CD4-positive, alpha-beta T cell (primary cell): ENCODE measurements at regions of chr20 and their contacts with region 1.

Region 1: GRCh38 chr20:63707549-63708300 is at the starts of genes ARFRP1 and ZGPAT:
- DNase-seq: peak; percentile 71 to 94 (median 88)
- ATAC-seq: peak; percentile 78
- H3K4me3 ChIP-seq: peak within 1 kb of the TSS; percentile 76
- H3K4me3 Mint-ChIP-seq: peak within 1 kb of the TSS; percentile 88
- H3K27ac ChIP-seq: peak within 1 kb of the TSS; percentile 55 to 71
- H3K27ac Mint-ChIP-seq: peak within 1 kb of the TSS; percentile 89
- H3K4me1 ChIP-seq: peaks cover 45% of the 10 kb centered on the region
- H3K4me1 Mint-ChIP-seq: peaks cover 46% of the 10 kb centered on the region
- H3K27me3 ChIP-seq: no peaks in the 10 kb centered on the region
- H3K27me3 Mint-ChIP-seq: no peaks in the 10 kb centered on the region
- CTCF ChIP-seq: no peak
- total RNA-seq, gene ARFRP1: 34.5 to 35.7 TPM
- total RNA-seq, gene ZGPAT: 28.2 to 33.4 TPM

Region 2: DNA sequence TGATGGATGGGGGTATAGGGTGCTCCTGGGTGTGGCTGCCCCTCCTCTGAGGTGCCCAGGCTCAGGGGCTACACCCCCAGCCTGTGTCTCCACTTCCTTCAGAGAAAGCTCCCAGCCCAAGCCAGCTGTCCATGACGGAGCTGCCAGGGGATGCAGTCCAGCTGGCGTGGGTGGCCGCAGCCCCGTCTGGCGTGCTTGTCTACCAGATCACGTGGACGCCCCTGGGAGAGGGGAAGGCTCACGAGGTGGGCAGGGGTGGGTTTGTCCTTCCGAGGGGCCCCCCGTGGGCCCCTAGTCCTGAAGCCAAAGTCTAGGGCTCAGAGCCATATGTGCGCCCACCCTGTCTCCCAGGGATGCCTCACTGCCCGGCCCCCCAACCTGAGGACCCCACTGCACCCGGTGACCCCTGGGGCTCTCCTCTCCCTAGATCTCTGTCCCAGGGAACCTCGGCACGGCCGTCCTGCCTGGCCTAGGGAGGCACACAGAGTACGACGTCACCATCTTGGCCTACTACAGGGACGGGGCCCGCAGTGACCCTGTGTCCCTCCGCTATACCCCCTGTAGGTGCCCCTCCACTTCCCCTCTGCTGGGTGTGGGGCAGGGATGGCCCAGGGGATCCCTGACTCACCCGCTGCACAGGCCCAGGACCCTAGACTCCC is 394.9 kb before region 1 on chr20:
- CTCF ChIA-PET with region 1: no interaction called
- POLR2A ChIA-PET with region 1: no interaction called
- intact Hi-C with region 1: no loop called
- DNase-seq: no peak
- ATAC-seq: no peak
- H3K4me3 ChIP-seq: no peak overlapping the region
- H3K4me3 Mint-ChIP-seq: no peak overlapping the region
- H3K27ac ChIP-seq: no peak overlapping the region
- H3K27ac Mint-ChIP-seq: no peak overlapping the region
- H3K4me1 ChIP-seq: no peaks in the 10 kb centered on the region
- H3K4me1 Mint-ChIP-seq: no peaks in the 10 kb centered on the region
- H3K27me3 ChIP-seq: peaks cover 0 to 8% of the 10 kb centered on the region in 2 experiments
- H3K27me3 Mint-ChIP-seq: no peaks in the 10 kb centered on the region
- CTCF ChIP-seq: no peak

Region 3: DNA sequence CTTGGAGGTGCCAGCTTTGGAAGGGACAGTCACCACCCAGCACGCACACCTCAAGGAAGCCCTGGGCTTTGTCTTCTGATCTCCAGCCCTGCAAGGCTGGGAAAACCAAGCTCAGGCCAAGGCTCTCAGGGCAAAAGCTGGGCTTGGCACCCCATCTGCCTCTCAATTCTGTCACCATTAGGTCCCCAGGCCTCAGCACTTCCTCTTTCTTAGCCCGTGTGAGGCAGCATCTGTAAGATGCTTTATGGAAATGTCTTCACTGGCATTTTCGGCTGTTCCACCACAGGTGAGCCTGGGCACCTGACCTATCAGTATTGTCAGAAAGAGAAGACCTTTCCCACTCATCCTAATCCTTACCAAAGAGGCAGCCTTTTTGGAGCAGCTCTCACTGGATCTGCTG is 105.4 kb before region 1 on chr20:
- CTCF ChIA-PET with region 1: no interaction called
- POLR2A ChIA-PET with region 1: no interaction called
- intact Hi-C with region 1: no loop called
- DNase-seq: no peak
- ATAC-seq: no peak
- H3K4me3 ChIP-seq: no peak overlapping the region
- H3K4me3 Mint-ChIP-seq: no peak overlapping the region
- H3K27ac ChIP-seq: peak overlapping the region in 1 of 2 donors; percentile 30
- H3K27ac Mint-ChIP-seq: no peak overlapping the region
- H3K4me1 ChIP-seq: peaks cover 16% of the 10 kb centered on the region
- H3K4me1 Mint-ChIP-seq: no peaks in the 10 kb centered on the region
- H3K27me3 ChIP-seq: no peaks in the 10 kb centered on the region
- H3K27me3 Mint-ChIP-seq: no peaks in the 10 kb centered on the region
- CTCF ChIP-seq: no peak

Region 4: GRCh38 chr20:63657937-63658748 is 49.6 kb before region 1 on chr20 and contains the start of gene RTEL1:
- CTCF ChIA-PET with region 1: interaction called, 4 read pairs
- POLR2A ChIA-PET with region 1: interaction called, 22 read pairs
- intact Hi-C with region 1: loop called (anchors 1 to 2 kb)
- DNase-seq: peak; percentile 77 to 93 (median 86)
- ATAC-seq: peak; percentile 83
- H3K4me3 ChIP-seq: peak within 1 kb of the TSS; percentile 76
- H3K4me3 Mint-ChIP-seq: peak within 1 kb of the TSS; percentile 98
- H3K27ac ChIP-seq: peak within 1 kb of the TSS; percentile 56 to 87
- H3K27ac Mint-ChIP-seq: peak within 1 kb of the TSS; percentile 96
- H3K4me1 ChIP-seq: peaks cover 47% of the 10 kb centered on the region
- H3K4me1 Mint-ChIP-seq: peaks cover 38% of the 10 kb centered on the region
- H3K27me3 ChIP-seq: no peaks in the 10 kb centered on the region
- H3K27me3 Mint-ChIP-seq: no peaks in the 10 kb centered on the region
- CTCF ChIP-seq: no peak
- total RNA-seq, gene RTEL1: 25.5 to 27.6 TPM

Region 5: GRCh38 chr20:63750807-63751470 is 43.2 kb after region 1 on chr20:
- CTCF ChIA-PET with region 1: interaction called, 6 read pairs
- POLR2A ChIA-PET with region 1: interaction called, 18 read pairs
- intact Hi-C with region 1: loop called in 1 of 2 experiments (anchors 1 kb)
- DNase-seq: peak; percentile 44 to 86 (median 67)
- ATAC-seq: peak; percentile 93
- H3K4me3 ChIP-seq: peak overlapping the region; percentile 9
- H3K4me3 Mint-ChIP-seq: peak overlapping the region; percentile 81
- H3K27ac ChIP-seq: peak overlapping the region; percentile 37 to 70
- H3K27ac Mint-ChIP-seq: peak overlapping the region; percentile 93
- H3K4me1 ChIP-seq: peaks cover 35% of the 10 kb centered on the region
- H3K4me1 Mint-ChIP-seq: peaks cover 32% of the 10 kb centered on the region
- H3K27me3 ChIP-seq: no peaks in the 10 kb centered on the region
- H3K27me3 Mint-ChIP-seq: no peaks in the 10 kb centered on the region
- CTCF ChIP-seq: no peak

Region 6: GRCh38 chr20:63864847-63865640 is 157.3 kb after region 1 on chr20 and contains the start of gene TPD52L2:
- CTCF ChIA-PET with region 1: interaction called, 8 read pairs
- POLR2A ChIA-PET with region 1: interaction called, 25 read pairs
- intact Hi-C with region 1: loop called (anchors 1 to 2 kb)
- DNase-seq: peak; percentile 94 to 99 (median 97)
- ATAC-seq: peak; percentile 88
- H3K4me3 ChIP-seq: peak within 1 kb of the TSS; percentile 98
- H3K4me3 Mint-ChIP-seq: peak within 1 kb of the TSS; percentile 97
- H3K27ac ChIP-seq: peak within 1 kb of the TSS; percentile 78 to 89
- H3K27ac Mint-ChIP-seq: peak within 1 kb of the TSS; percentile 85
- H3K4me1 ChIP-seq: peaks cover 37% of the 10 kb centered on the region
- H3K4me1 Mint-ChIP-seq: peaks cover 31% of the 10 kb centered on the region
- H3K27me3 ChIP-seq: no peaks in the 10 kb centered on the region
- H3K27me3 Mint-ChIP-seq: no peaks in the 10 kb centered on the region
- CTCF ChIP-seq: no peak
- total RNA-seq, gene TPD52L2: 15.1 to 15.3 TPM

Region 7: DNA sequence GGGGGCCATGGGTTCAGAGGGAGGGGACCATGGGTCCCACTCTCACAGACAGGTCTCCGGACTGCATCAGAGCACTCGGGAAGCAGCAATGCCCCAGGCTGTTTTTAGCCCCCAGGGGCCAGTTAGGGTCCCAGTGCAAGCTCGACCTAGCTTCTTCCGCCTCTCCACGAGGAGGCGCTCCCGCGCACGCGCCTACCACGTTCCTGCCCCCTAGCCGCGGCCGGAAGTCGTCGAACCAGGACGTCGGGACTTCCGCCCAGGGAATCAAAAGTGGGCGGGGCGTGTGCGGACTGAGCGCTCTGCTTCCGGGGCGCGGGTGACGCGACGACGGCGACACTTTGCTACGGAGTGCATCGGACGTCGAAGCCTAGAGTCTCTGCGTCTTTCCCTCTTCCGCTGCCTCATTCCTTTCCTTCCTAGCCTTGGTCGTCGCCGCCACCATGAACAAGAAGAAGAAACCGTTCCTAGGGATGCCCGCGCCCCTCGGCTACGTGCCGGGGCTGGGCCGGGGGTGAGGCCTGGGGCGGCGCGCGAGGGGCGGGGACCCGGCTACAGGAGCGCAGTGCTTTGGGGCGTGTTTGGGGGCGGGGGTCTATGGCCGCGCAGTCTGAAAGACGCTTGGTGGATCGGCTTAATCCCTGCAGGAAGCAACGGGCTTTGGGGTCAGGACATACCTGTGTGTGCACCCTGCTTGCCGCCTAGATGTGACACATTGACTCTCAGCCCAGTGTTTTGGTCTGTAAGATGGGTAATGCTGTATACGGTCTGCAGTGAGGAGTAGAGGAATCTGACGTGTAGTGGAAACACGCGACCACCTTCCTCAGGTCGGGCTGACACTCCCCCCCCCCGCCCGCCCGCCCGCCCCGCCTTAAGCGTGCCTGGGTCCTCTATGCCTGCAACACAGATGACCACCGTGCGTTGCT is 273.3 kb after region 1 on chr20 and contains the start of gene PRPF6:
- CTCF ChIA-PET with region 1: interaction called, 6 read pairs
- POLR2A ChIA-PET with region 1: no interaction called
- intact Hi-C with region 1: loop called (anchors 5 to 10 kb)
- DNase-seq: peak; percentile 89 to 98 (median 94)
- ATAC-seq: peak; percentile 58
- H3K4me3 ChIP-seq: peak within 1 kb of the TSS; percentile 69
- H3K4me3 Mint-ChIP-seq: peak within 1 kb of the TSS; percentile 90
- H3K27ac ChIP-seq: peak within 1 kb of the TSS; percentile 85 to 87
- H3K27ac Mint-ChIP-seq: peak within 1 kb of the TSS; percentile 98
- H3K4me1 ChIP-seq: peaks cover 60% of the 10 kb centered on the region
- H3K4me1 Mint-ChIP-seq: peaks cover 67% of the 10 kb centered on the region
- H3K27me3 ChIP-seq: no peaks in the 10 kb centered on the region
- H3K27me3 Mint-ChIP-seq: no peaks in the 10 kb centered on the region
- CTCF ChIP-seq: peak; percentile 93
- total RNA-seq, gene PRPF6: 50.6 to 51.3 TPM